ENCODE measurements at regions of chr16 and their contacts with region 1.

Region 1: GRCh38 chr16:22333457-22333994 is 36.3 kb downstream of the POLR3E start:
- DNase-seq: no peak
- H3K4me3 Mint-ChIP-seq: no peak overlapping the region
- H3K27ac Mint-ChIP-seq: no peak overlapping the region
- H3K4me1 Mint-ChIP-seq: no peaks in the 10 kb centered on the region
- H3K27me3 Mint-ChIP-seq: no peaks in the 10 kb centered on the region
- CTCF ChIP-seq: no peak

Region 2: DNA sequence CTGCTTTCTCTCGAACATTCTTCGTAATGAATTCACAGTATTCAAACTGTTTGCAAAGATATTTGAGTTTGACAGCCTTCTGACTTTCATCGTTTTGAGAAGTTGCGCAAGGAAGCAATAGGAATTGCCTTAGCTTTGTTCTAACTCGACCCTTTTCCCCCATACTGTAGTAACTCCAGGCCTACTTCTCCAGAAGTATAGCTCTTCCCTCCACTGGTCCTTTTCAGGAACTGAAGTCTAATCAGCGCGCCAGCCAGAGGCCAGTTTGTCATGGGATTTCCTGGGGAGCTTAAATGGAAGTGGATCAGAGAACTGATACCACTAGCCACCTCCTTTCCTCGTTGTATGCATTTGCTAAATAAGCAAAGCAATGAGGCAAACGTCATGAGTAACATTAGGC is 13.0 kb after region 1 on chr16:
- CTCF ChIA-PET with region 1: interaction called, 10 read pairs
- POLR2A ChIA-PET with region 1: interaction called, 5 read pairs
- intact Hi-C with region 1: no loop called
- DNase-seq: no peak
- H3K4me3 Mint-ChIP-seq: no peak overlapping the region
- H3K27ac Mint-ChIP-seq: no peak overlapping the region
- H3K4me1 Mint-ChIP-seq: peaks cover 10% of the 10 kb centered on the region
- H3K27me3 Mint-ChIP-seq: no peaks in the 10 kb centered on the region
- CTCF ChIP-seq: no peak

Region 3: DNA sequence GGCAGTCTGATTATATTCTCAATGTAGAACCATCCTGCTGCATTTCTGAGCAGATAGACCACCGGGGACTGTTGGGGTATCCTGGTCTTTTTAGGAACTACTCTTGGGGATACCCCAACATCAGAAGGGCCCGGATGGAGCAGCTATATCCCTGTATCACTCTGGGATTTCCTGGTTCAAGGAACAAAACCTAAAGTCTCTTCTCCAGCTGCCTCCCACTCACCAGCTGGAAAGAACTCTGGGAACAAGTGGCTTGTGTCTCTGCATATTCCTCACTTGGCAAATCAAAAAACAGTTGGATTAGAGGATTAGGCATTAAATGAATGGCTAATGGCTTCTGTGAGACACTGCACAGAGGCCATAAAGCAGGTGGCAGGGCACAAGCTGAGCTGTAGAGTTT is 418.2 kb after region 1 on chr16:
- CTCF ChIA-PET with region 1: no interaction called
- POLR2A ChIA-PET with region 1: no interaction called
- intact Hi-C with region 1: no loop called
- DNase-seq: no peak
- H3K4me3 Mint-ChIP-seq: no peak overlapping the region
- H3K27ac Mint-ChIP-seq: no peak overlapping the region
- H3K4me1 Mint-ChIP-seq: no peaks in the 10 kb centered on the region
- H3K27me3 Mint-ChIP-seq: peaks cover 32% of the 10 kb centered on the region
- CTCF ChIP-seq: no peak